ENCODE measurements at regions of chr18 and their contacts with region 1.

Region 1: DNA sequence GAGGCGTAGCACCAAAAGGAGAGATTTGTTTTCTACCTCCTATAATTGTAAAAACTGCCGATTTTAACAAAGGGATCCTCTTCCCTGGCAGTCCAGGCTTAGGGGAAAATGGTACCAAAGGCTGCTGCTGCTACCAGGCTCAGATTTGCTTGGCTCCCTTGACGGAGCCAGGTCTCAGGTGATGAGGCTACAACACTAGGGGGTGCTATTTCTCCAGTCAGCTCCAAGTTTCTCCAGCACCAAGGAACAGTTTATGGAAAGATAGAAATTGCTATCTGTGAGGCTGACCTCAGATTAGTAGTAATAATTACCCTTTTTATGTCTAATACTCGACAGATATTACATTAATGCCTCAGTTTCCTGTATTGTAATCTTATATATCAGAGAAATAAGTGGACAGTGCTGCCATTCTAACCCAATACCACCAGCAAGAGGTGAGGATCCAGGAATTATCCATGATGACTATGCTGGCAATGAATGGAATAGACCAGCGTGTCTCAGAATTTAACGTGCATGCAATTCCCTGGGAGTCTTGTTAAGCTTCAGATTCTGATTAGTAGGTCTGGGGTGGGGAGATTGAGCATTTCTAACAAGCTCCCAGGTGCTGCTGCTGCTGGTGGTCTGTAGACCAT is 111.3 kb downstream of the ESCO1 start:
- DNase-seq: peak in 5 of 9 donors; percentile 6 to 33 (median 22)
- ATAC-seq: peak; percentile 38
- H3K4me3 ChIP-seq: no peak overlapping the region
- H3K4me3 Mint-ChIP-seq: no peak overlapping the region
- H3K27ac ChIP-seq: no peak overlapping the region
- H3K27ac Mint-ChIP-seq: no peak overlapping the region
- H3K4me1 ChIP-seq: no peaks in the 10 kb centered on the region
- H3K4me1 Mint-ChIP-seq: peaks cover 0 to 1% (median 0%) of the 10 kb centered on the region in 7 donors
- H3K27me3 ChIP-seq: no peaks in the 10 kb centered on the region
- H3K27me3 Mint-ChIP-seq: peaks cover 0 to 4% (median 0%) of the 10 kb centered on the region in 5 donors

Region 2: DNA sequence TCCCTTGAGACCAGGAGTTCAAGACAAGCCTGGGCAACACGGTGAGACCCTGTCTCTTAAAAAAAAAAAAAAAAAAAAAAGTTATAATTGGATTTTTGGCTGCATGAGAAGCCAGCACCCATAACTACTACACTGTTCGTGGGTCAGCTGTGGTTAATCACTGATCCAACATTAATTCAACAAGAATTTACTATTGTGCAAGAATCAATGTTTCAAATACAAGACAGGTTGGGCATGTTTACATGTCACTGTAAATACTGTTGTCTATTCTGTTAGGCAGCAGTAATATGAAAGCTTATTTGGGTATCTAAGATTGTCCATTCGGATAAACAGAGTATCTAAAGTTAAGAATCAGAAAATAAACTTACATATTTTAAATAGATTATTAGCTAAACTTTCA is 49.0 kb after region 1 on chr18:
- CTCF ChIA-PET with region 1: no interaction called
- POLR2A ChIA-PET with region 1: no interaction called
- intact Hi-C with region 1: no loop called
- DNase-seq: no peak
- ATAC-seq: no peak
- H3K4me3 ChIP-seq: no peak overlapping the region
- H3K4me3 Mint-ChIP-seq: no peak overlapping the region
- H3K27ac ChIP-seq: no peak overlapping the region
- H3K27ac Mint-ChIP-seq: no peak overlapping the region
- H3K4me1 ChIP-seq: no peaks in the 10 kb centered on the region
- H3K4me1 Mint-ChIP-seq: peaks cover 0 to 5% (median 4%) of the 10 kb centered on the region in 7 donors
- H3K27me3 ChIP-seq: no peaks in the 10 kb centered on the region
- H3K27me3 Mint-ChIP-seq: no peaks in the 10 kb centered on the region

Region 3: GRCh38 chr18:21851327-21851972 is 362.2 kb after region 1 on chr18:
- CTCF ChIA-PET with region 1: no interaction called
- POLR2A ChIA-PET with region 1: no interaction called
- intact Hi-C with region 1: loop called in 1 of 2 experiments (anchors 5 kb)
- DNase-seq: peak in 4 of 9 donors; percentile 1 to 17 (median 4)
- ATAC-seq: no peak
- H3K4me3 ChIP-seq: no peak overlapping the region
- H3K4me3 Mint-ChIP-seq: no peak overlapping the region
- H3K27ac ChIP-seq: no peak overlapping the region
- H3K27ac Mint-ChIP-seq: peak overlapping the region in 1 of 9 donors; percentile 18
- H3K4me1 ChIP-seq: no peaks in the 10 kb centered on the region
- H3K4me1 Mint-ChIP-seq: peaks cover 0 to 11% (median 9%) of the 10 kb centered on the region in 7 donors
- H3K27me3 ChIP-seq: no peaks in the 10 kb centered on the region
- H3K27me3 Mint-ChIP-seq: no peaks in the 10 kb centered on the region

Region 4: DNA sequence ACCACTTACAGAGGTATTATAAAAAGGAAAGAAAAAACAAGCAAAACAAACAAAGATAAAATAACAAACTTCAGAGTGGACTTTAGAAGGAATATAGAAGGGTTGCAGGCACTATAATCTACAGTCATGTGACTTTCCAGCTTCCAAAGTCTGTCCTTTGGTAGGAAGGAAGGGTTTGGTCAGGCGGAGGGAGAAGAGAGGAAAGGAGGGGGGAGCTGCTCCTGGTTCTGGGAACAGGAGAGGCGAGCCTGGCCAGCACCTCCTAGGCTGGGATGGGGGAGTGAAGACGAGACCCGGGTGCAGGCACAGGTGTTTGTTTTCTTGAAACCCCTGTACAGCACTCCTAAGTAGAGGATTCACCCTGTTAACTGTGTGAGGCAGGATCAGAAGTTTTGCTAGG is 626.3 kb after region 1 on chr18:
- CTCF ChIA-PET with region 1: no interaction called
- POLR2A ChIA-PET with region 1: no interaction called
- intact Hi-C with region 1: no loop called
- DNase-seq: no peak
- ATAC-seq: no peak
- H3K4me3 ChIP-seq: no peak overlapping the region
- H3K4me3 Mint-ChIP-seq: no peak overlapping the region
- H3K27ac ChIP-seq: no peak overlapping the region
- H3K27ac Mint-ChIP-seq: no peak overlapping the region
- H3K4me1 ChIP-seq: no peaks in the 10 kb centered on the region
- H3K4me1 Mint-ChIP-seq: no peaks in the 10 kb centered on the region
- H3K27me3 ChIP-seq: no peaks in the 10 kb centered on the region
- H3K27me3 Mint-ChIP-seq: peaks cover 0 to 4% (median 3%) of the 10 kb centered on the region in 5 donors

Region 5: GRCh38 chr18:22703883-22704585 is 1214.8 kb after region 1 on chr18:
- CTCF ChIA-PET with region 1: no interaction called
- POLR2A ChIA-PET with region 1: no interaction called
- intact Hi-C with region 1: loop called in 1 of 2 experiments (anchors 10 kb)
- DNase-seq: peak in 3 of 9 donors; percentile 2 to 29 (median 7)
- ATAC-seq: peak; percentile 52
- H3K4me3 ChIP-seq: no peak overlapping the region
- H3K4me3 Mint-ChIP-seq: no peak overlapping the region
- H3K27ac ChIP-seq: no peak overlapping the region
- H3K27ac Mint-ChIP-seq: no peak overlapping the region
- H3K4me1 ChIP-seq: no peaks in the 10 kb centered on the region
- H3K4me1 Mint-ChIP-seq: no peaks in the 10 kb centered on the region
- H3K27me3 ChIP-seq: no peaks in the 10 kb centered on the region
- H3K27me3 Mint-ChIP-seq: peaks cover 2 to 20% (median 14%) of the 10 kb centered on the region in 5 donors